ENCODE measurements at regions of chr22 and their contacts with region 1.

Region 1: DNA sequence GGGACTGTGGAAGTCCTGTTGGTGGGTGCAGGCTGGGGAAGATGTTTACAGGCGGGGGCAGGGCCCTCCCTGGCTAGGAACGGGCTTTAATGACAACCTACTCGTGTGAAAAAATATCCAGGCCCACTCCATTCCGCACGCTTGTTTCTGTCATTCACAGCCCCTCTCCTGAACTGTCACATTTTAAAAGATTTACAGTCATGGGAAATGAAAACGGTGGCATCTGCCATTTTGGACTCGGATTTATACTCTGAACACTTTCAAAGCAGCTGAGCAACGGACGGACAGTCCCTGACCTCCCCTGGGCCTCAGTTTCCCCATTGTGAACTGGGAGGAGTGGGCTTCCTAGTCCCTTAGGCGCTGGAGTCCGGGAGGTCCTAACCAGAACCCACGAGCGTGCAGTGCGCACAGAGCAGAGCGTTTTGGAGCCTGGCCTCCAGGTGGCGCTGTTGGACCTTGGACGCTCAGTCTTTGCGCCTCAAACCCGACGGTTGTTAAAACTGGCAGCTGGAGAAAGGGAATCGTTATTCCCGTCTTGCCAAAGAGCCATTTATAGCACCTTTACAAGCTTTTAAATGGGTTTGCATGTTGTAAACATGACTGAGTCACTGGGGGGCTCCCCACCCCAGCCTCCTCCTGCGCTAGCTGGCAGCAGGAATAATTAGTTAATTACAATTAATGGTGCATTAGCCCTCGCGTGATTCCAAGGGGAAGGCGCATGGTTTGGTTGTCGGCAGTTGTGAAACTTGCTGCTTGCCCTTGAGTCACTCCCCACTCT is 75.3 kb downstream of the FBLN1 start:
- DNase-seq: peak; percentile 86
- H3K4me3 Mint-ChIP-seq: no peak overlapping the region
- H3K27ac Mint-ChIP-seq: no peak overlapping the region
- H3K4me1 Mint-ChIP-seq: no peaks in the 10 kb centered on the region
- H3K27me3 Mint-ChIP-seq: peaks cover 5% of the 10 kb centered on the region

Region 2: GRCh38 chr22:45485261-45485660 is 92.7 kb before region 1 on chr22:
- CTCF ChIA-PET with region 1: no interaction called
- intact Hi-C with region 1: no loop called
- DNase-seq: no peak
- H3K4me3 Mint-ChIP-seq: no peak overlapping the region
- H3K27ac Mint-ChIP-seq: no peak overlapping the region
- H3K4me1 Mint-ChIP-seq: no peaks in the 10 kb centered on the region
- H3K27me3 Mint-ChIP-seq: no peaks in the 10 kb centered on the region

Region 3: GRCh38 chr22:45553351-45554039 is 24.4 kb before region 1 on chr22:
- CTCF ChIA-PET with region 1: no interaction called
- intact Hi-C with region 1: no loop called
- DNase-seq: peak; percentile 73
- H3K4me3 Mint-ChIP-seq: no peak overlapping the region
- H3K27ac Mint-ChIP-seq: no peak overlapping the region
- H3K4me1 Mint-ChIP-seq: peaks cover 1% of the 10 kb centered on the region
- H3K27me3 Mint-ChIP-seq: peaks cover 6% of the 10 kb centered on the region

Region 4: DNA sequence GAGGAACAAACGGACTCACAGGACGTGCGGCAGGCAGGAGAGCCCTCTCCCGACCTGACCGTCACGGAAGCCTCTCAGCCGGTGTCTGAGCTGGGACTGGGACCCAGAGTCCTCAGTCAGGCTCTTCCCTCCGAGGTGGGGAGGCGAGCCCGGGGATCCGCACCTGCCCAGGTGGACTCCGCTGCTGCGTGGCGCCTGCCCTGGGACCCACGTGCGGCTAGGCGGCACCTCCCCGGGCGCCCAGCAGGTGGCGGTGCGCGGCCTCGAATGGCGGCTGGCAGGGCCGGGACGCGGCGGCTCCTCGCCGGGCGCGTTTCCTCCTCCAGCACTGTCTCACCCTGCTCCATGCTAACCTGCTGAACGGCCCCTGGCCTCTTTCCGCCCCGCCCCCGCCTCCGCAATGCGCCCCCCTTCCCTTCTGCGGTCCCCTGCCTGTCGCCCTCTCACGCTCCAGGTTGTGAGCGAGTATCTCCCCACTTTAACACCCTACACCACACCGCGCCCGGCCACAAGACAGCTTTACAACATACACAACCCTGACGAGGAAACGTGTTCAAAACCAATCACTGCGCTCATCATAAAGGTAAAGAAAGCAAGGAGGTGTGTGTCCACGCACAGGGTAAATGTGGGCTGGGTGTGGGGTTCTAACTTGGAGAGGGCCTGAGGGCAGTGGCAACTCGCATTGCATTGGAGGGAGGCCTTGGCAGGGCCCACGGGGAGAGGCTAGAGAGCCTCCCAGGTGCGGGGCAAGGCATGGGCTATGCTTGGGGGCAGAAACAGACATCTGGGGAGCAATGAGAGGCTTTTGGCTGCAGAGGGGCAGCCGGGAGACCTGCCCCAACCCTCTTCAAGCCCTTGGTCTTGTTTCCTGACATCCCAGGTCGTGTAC is 67.8 kb after region 1 on chr22:
- CTCF ChIA-PET with region 1: interaction called, 3 read pairs
- intact Hi-C with region 1: loop called (anchors 5 kb)
- DNase-seq: peak; percentile 79
- H3K4me3 Mint-ChIP-seq: no peak overlapping the region
- H3K27ac Mint-ChIP-seq: no peak overlapping the region
- H3K4me1 Mint-ChIP-seq: no peaks in the 10 kb centered on the region
- H3K27me3 Mint-ChIP-seq: peaks cover 32% of the 10 kb centered on the region

Region 5: DNA sequence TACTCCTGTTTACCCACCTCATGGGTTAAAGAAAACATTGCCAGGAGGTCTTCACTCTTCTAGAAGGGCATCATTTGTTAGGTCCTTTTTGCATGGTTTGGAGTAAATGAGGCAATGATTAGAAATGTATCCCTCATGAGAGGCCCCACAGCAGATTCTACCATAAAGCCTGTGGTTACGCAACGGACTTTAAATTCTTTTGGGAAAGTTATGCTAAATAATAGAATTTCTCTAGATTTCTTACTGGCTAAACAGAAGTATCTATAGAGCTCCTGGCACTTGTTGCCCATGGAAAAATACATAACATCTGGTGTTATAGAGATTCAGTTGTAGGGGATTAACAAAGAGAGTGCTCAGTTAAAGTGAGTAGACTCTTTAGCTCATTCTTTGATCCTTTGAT is 78.6 kb after region 1 on chr22:
- CTCF ChIA-PET with region 1: no interaction called
- intact Hi-C with region 1: no loop called
- DNase-seq: no peak
- H3K4me3 Mint-ChIP-seq: no peak overlapping the region
- H3K27ac Mint-ChIP-seq: no peak overlapping the region
- H3K4me1 Mint-ChIP-seq: no peaks in the 10 kb centered on the region
- H3K27me3 Mint-ChIP-seq: no peaks in the 10 kb centered on the region